Activated CD8-positive, alpha-beta T cell treated with anti-CD3 and anti-CD28 coated beads for 36 hours (primary cell): ENCODE measurements at regions of chr10 and their contacts with region 1.

Region 1: GRCh38 chr10:30583778-30584415 is 45.7 kb downstream of the LYZL2 start:
- DNase-seq: peak; percentile 7
- ATAC-seq: no peak
- H3K4me3 Mint-ChIP-seq: peak overlapping the region; percentile 23
- H3K27ac Mint-ChIP-seq: no peak overlapping the region
- H3K4me1 Mint-ChIP-seq: peaks cover 4% of the 10 kb centered on the region
- H3K27me3 Mint-ChIP-seq: peaks cover 2% of the 10 kb centered on the region
- CTCF ChIP-seq: no peak

Region 2: GRCh38 chr10:30392564-30392990 is 191.3 kb before region 1 on chr10:
- CTCF ChIA-PET with region 1: interaction called, 129 read pairs
- POLR2A ChIA-PET with region 1: no interaction called
- intact Hi-C with region 1: no loop called
- DNase-seq: peak; percentile 78
- ATAC-seq: peak; percentile 100
- H3K4me3 Mint-ChIP-seq: no peak overlapping the region
- H3K27ac Mint-ChIP-seq: no peak overlapping the region
- H3K4me1 Mint-ChIP-seq: peaks cover 3% of the 10 kb centered on the region
- H3K27me3 Mint-ChIP-seq: peaks cover 11% of the 10 kb centered on the region
- CTCF ChIP-seq: peak; percentile 88

Region 3: DNA sequence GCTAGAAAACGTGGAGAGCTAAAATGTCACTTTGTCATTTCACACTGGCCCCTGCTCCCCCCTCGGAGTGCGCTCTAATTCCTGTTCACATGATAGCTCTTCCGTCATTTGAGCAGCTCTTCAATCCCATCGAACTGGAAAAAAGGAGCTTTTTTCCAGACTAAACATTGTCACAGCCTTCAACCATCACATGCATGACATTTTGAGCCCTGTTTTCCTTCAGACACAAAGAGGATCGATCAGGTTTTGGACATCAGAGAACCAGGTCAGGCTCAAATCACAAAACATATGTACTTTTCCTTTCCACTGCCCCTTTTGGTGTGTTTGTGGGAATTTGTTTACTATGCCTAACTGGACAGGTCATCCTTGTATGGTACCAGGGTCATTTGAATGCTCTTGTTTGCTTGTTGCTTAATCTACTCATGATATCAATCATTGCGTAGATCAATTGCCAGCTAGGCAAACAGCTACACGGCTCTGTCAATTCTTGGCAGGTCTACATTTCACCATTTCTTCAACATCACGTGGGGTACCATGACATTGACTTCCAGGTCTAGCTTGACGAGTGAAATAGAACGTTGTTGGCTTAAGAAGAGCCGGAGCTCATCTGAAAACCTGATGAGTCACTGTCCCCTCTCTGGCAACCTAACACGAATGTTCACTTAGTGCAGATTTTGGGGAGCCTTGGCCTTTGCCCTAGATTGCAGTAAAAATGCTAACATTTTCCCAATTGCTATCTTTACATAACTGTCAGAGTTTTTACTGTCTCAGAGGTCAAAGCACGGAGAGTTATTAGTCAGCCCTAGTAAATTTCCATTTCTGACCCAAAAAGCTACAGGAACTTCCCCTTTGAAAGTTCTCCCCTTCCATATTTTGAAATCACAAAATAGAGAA is 41.6 kb before region 1 on chr10:
- CTCF ChIA-PET with region 1: interaction called, 12 read pairs
- POLR2A ChIA-PET with region 1: interaction called, 3 read pairs
- intact Hi-C with region 1: no loop called
- DNase-seq: no peak
- ATAC-seq: peak; percentile 45
- H3K4me3 Mint-ChIP-seq: no peak overlapping the region
- H3K27ac Mint-ChIP-seq: no peak overlapping the region
- H3K4me1 Mint-ChIP-seq: peaks cover 12% of the 10 kb centered on the region
- H3K27me3 Mint-ChIP-seq: peaks cover 2% of the 10 kb centered on the region
- CTCF ChIP-seq: no peak

Region 4: GRCh38 chr10:30562787-30563186 is 21.1 kb before region 1 on chr10:
- CTCF ChIA-PET with region 1: interaction called, 19 read pairs
- POLR2A ChIA-PET with region 1: no interaction called
- intact Hi-C with region 1: no loop called
- DNase-seq: peak; percentile 58
- ATAC-seq: peak; percentile 72
- H3K4me3 Mint-ChIP-seq: no peak overlapping the region
- H3K27ac Mint-ChIP-seq: no peak overlapping the region
- H3K4me1 Mint-ChIP-seq: no peaks in the 10 kb centered on the region
- H3K27me3 Mint-ChIP-seq: peaks cover 10% of the 10 kb centered on the region
- CTCF ChIP-seq: no peak

Region 5: GRCh38 chr10:30606313-30606712 is 22.4 kb after region 1 on chr10:
- CTCF ChIA-PET with region 1: interaction called, 10 read pairs
- POLR2A ChIA-PET with region 1: no interaction called
- intact Hi-C with region 1: no loop called
- DNase-seq: no peak
- ATAC-seq: no peak
- H3K4me3 Mint-ChIP-seq: no peak overlapping the region
- H3K27ac Mint-ChIP-seq: no peak overlapping the region
- H3K4me1 Mint-ChIP-seq: no peaks in the 10 kb centered on the region
- H3K27me3 Mint-ChIP-seq: peaks cover 8% of the 10 kb centered on the region
- CTCF ChIP-seq: no peak

Region 6: DNA sequence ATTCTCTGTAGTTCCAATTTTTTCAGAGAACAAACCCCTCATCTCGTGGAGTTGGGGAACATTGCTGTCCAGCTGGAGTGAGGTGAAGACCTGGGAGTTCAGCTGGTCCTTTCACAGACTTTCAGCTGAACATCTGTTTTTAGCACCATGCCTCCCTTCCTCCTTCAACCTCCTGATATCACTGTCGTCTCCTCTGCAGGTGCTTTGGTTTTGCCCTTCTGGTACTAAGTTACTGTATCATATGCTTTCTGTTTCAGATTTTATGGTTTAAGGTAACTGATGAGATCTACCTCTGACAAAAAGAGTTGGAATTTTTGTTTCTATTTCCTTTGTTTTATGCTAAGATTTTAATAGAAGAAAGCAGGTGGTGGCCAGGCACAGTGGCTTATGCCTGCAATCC is 344.8 kb after region 1 on chr10:
- CTCF ChIA-PET with region 1: no interaction called
- POLR2A ChIA-PET with region 1: no interaction called
- intact Hi-C with region 1: no loop called
- DNase-seq: no peak
- ATAC-seq: peak; percentile 30
- H3K4me3 Mint-ChIP-seq: peak overlapping the region; percentile 63
- H3K27ac Mint-ChIP-seq: peak overlapping the region; percentile 47
- H3K4me1 Mint-ChIP-seq: peaks cover 10% of the 10 kb centered on the region
- H3K27me3 Mint-ChIP-seq: no peaks in the 10 kb centered on the region
- CTCF ChIP-seq: no peak